CD4-positive, alpha-beta T cell (primary cell): ENCODE measurements at regions of chr19 and their contacts with region 1.

Region 1: DNA sequence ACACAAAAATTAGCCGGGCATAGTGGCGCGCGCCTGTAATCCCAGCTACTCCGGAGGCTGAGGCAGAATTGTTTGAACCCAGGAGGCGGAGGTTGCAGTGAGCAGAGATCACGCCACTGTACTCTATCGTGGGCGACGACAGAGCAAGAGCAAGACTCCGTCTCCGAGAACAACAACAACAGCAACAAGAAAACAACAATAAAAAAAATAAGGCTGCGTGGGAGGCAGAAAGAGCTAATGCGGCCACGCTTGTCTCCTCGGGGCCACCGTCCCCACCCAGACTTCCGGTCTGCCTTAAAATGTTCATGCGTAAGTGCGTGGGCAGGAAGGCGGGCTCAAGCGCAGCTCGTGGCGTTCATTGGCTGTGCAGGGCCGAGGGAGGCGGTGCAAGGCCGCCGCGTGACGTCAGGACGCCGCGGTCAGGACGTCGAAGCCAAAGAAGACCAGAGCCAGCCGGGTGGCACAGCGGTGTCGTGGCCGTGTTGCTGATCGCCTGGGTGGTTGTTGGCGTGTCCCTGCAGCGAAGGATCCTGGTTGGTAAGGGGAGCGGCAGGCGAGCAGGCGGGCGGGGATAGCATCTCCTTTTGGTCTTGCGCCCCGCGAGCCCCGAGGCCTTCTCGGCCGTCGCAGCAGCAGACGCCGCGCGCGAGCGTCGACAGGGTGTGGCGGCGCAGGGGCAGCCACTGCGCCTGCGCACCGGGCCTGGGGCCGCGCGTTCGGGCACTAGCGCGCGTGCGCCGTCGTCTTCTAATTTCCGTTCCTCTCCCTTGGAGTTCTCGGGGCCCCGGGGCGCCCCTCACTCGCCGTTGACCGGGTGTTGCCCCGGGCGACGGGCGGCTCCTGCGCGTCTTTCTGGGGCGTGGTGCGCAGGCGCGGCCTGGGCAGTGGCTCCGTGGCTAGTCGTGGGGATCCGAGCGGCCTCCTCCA is at the start of gene LENG8:
- DNase-seq: peak; percentile 93 to 100 (median 97)
- ATAC-seq: peak; percentile 90
- H3K4me3 ChIP-seq: peak within 1 kb of the TSS; percentile 98
- H3K4me3 Mint-ChIP-seq: peak within 1 kb of the TSS; percentile 92
- H3K27ac ChIP-seq: peak within 1 kb of the TSS; percentile 91 to 98
- H3K27ac Mint-ChIP-seq: peak within 1 kb of the TSS; percentile 98
- H3K4me1 ChIP-seq: peaks cover 48% of the 10 kb centered on the region
- H3K4me1 Mint-ChIP-seq: peaks cover 56% of the 10 kb centered on the region
- H3K27me3 ChIP-seq: no peaks in the 10 kb centered on the region
- H3K27me3 Mint-ChIP-seq: no peaks in the 10 kb centered on the region
- CTCF ChIP-seq: no peak
- total RNA-seq, gene LENG8: 610 to 639 TPM

Region 2: DNA sequence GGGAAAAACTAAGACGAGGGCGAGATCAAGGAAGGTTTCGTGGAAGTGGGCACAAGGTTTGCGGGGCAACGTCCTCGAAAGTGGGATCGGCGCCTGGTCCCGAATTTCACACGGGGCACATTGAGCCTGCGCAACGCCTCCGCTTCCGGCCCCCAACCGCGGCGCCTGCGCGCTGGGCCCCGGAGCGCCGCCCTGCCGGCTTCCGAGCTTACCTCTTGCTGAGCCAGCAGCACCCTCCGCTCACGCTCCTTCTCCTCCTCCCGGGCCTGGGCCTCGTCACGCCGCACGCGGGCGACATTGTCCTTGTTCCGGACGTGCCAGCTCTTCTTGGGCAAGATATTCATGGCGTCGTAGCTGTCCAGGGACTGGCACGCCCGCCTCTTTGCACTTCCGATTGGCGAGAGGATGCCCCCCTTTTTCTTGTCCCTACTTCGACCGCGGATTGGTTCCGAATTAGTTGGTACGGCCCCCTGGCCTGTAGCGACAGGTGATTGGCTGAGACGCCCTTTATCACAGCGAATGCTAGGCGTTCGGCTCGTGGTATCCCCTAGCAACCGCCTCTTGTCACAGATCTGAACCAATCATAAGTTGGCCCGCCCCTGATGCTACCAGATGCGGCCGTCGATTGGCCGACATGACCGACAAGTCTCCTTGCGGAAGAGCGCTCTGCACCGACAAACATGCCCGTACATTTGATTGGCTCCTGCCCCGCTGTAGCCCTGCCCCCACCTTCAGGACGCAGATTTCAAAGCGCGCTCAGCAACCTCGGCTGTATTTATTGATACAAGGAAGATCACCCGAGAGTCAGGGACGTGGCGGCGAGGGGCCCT is 289.5 kb before region 1 on chr19 and contains the start of gene LENG1:
- CTCF ChIA-PET with region 1: no interaction called
- POLR2A ChIA-PET with region 1: interaction called, 17 read pairs
- intact Hi-C with region 1: no loop called
- DNase-seq: peak; percentile 91 to 100 (median 98)
- ATAC-seq: peak; percentile 84
- H3K4me3 ChIP-seq: peak within 1 kb of the TSS; percentile 90
- H3K4me3 Mint-ChIP-seq: peak within 1 kb of the TSS; percentile 98
- H3K27ac ChIP-seq: peak within 1 kb of the TSS; percentile 86 to 92
- H3K27ac Mint-ChIP-seq: peak within 1 kb of the TSS; percentile 94
- H3K4me1 ChIP-seq: peaks cover 81% of the 10 kb centered on the region
- H3K4me1 Mint-ChIP-seq: peaks cover 55% of the 10 kb centered on the region
- H3K27me3 ChIP-seq: no peaks in the 10 kb centered on the region
- H3K27me3 Mint-ChIP-seq: no peaks in the 10 kb centered on the region
- CTCF ChIP-seq: no peak
- total RNA-seq, gene LENG1: 14.4 to 16.0 TPM

Region 3: DNA sequence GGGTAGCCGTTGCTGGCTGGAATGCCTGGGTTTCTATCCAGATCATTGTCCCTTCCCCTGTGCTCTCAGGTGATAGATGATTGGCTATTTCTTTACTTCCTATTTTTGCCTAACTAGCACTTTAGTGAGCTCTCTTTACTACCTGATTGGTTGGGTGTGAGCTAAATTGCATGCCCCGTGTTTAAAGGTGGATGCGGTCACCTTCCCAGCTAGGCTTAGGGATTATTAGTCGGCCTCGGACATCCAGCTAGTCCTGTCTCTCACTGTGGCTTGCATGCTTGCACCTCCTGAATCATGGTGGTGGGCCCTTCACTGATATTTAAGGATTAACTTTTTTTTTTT is 23.7 kb before region 1 on chr19:
- CTCF ChIA-PET with region 1: no interaction called
- POLR2A ChIA-PET with region 1: interaction called, 12 read pairs
- intact Hi-C with region 1: loop called in 1 of 2 experiments (anchors 2 kb)
- DNase-seq: no peak
- ATAC-seq: no peak
- H3K4me3 ChIP-seq: no peak overlapping the region
- H3K4me3 Mint-ChIP-seq: no peak overlapping the region
- H3K27ac ChIP-seq: no peak overlapping the region
- H3K27ac Mint-ChIP-seq: no peak overlapping the region
- H3K4me1 ChIP-seq: peaks cover 7% of the 10 kb centered on the region
- H3K4me1 Mint-ChIP-seq: no peaks in the 10 kb centered on the region
- H3K27me3 ChIP-seq: peaks cover 30 to 31% of the 10 kb centered on the region in 2 experiments
- H3K27me3 Mint-ChIP-seq: peaks cover 52% of the 10 kb centered on the region
- CTCF ChIP-seq: no peak

Region 4: GRCh38 chr19:54430306-54431254 is 18.5 kb before region 1 on chr19:
- CTCF ChIA-PET with region 1: no interaction called
- POLR2A ChIA-PET with region 1: interaction called, 12 read pairs
- intact Hi-C with region 1: loop called in 1 of 2 experiments (anchors 2 kb)
- DNase-seq: peak; percentile 17 to 66 (median 36)
- ATAC-seq: peak; percentile 94
- H3K4me3 ChIP-seq: peak overlapping the region; percentile 32
- H3K4me3 Mint-ChIP-seq: peak overlapping the region; percentile 51
- H3K27ac ChIP-seq: no peak overlapping the region
- H3K27ac Mint-ChIP-seq: no peak overlapping the region
- H3K4me1 ChIP-seq: peaks cover 24% of the 10 kb centered on the region
- H3K4me1 Mint-ChIP-seq: peaks cover 20% of the 10 kb centered on the region
- H3K27me3 ChIP-seq: peaks cover 17 to 26% of the 10 kb centered on the region in 2 experiments
- H3K27me3 Mint-ChIP-seq: peaks cover 21% of the 10 kb centered on the region
- CTCF ChIP-seq: no peak